B cell (primary cell): ENCODE measurements at regions of chr6 and their contacts with region 1.

Region 1: DNA sequence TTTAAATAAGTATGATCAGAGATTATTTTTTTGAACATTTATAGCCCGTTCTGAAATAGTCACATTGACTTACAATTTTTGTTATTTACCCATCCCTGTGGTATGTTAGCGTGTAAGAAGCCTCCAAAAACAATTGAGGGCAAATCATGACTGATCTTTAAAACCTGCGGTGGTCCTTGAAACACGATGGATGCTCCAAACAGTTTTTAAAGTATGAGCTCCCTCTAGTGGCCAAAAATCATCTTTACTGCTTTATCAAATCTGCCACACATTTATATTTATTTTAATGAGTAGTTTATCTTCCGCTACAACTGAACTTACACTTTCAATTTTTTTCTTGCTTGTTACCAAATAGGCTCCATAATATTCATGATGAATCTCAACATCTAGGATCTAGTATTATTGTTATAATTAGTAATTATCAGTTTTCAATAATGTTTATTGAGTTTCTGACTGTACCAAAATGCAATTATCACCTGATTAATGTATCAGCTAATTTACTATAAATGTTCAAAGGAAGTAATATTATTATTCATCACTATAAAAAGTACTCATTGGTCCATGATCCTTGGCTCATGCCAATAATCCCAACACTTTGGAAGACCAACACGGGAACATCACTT is 52.2 kb downstream of the MARCKS start:
- DNase-seq: peak; percentile 72
- ATAC-seq: peak; percentile 57
- H3K4me3 ChIP-seq: no peak overlapping the region
- H3K4me3 Mint-ChIP-seq: no peak overlapping the region
- H3K27ac ChIP-seq: no peak overlapping the region
- H3K27ac Mint-ChIP-seq: no peak overlapping the region
- H3K4me1 ChIP-seq: no peaks in the 10 kb centered on the region
- H3K4me1 Mint-ChIP-seq: peaks cover 2% of the 10 kb centered on the region
- H3K27me3 ChIP-seq: no peaks in the 10 kb centered on the region
- H3K27me3 Mint-ChIP-seq: no peaks in the 10 kb centered on the region
- CTCF ChIP-seq: peak; percentile 97

Region 2: DNA sequence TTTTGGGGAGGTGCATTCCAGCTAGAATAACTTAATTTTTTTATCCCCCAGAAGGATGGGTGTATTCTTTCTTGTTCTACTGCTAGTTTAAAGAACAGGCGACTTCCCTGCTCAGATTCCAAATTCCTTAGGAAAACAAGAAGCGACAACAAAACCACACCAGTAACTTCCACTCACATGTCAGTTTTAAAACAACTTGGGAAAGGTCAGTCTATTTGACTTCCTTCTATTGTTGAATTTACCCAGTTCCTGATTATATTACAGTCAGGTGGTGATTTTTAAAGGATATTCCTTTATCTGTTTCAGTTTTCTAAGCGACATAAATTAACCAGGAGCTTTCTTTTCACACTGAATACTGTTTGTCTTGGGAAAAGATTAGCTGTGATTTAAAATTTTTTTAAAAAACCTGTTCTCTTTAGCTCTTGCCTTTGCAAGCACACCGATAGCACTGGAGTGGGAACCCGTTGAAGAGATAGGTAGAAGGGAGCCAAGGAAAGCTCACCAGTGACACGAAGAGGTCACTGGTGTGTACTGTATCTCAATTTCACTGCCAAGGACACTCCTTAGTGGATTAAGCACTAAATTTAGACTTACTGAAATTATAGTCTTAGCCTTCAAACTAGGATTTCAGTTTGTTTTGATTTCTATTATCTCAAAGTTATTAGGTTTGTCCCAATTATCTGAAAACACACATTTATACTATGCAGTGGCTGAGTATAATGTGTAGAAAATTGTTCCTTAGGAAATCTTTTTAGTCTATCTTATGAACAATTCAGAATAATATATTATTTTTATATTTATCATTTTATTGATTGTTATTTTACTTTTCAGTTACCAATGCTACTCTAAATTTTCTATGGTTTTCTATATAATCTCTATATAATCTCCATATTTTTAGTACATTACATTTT is 29.9 kb before region 1 on chr6:
- CTCF ChIA-PET with region 1: interaction called, 20 read pairs
- POLR2A ChIA-PET with region 1: no interaction called
- intact Hi-C with region 1: loop called (anchors 1 kb)
- DNase-seq: peak; percentile 74
- ATAC-seq: peak; percentile 100
- H3K4me3 ChIP-seq: no peak overlapping the region
- H3K4me3 Mint-ChIP-seq: no peak overlapping the region
- H3K27ac ChIP-seq: no peak overlapping the region
- H3K27ac Mint-ChIP-seq: no peak overlapping the region
- H3K4me1 ChIP-seq: no peaks in the 10 kb centered on the region
- H3K4me1 Mint-ChIP-seq: peaks cover 3% of the 10 kb centered on the region
- H3K27me3 ChIP-seq: no peaks in the 10 kb centered on the region
- H3K27me3 Mint-ChIP-seq: no peaks in the 10 kb centered on the region
- CTCF ChIP-seq: peak; percentile 91

Region 3: GRCh38 chr6:113920663-113921267 is 11.4 kb after region 1 on chr6:
- CTCF ChIA-PET with region 1: interaction called, 23 read pairs
- POLR2A ChIA-PET with region 1: no interaction called
- intact Hi-C with region 1: no loop called
- DNase-seq: no peak
- ATAC-seq: no peak
- H3K4me3 ChIP-seq: no peak overlapping the region
- H3K4me3 Mint-ChIP-seq: no peak overlapping the region
- H3K27ac ChIP-seq: no peak overlapping the region
- H3K27ac Mint-ChIP-seq: no peak overlapping the region
- H3K4me1 ChIP-seq: no peaks in the 10 kb centered on the region
- H3K4me1 Mint-ChIP-seq: peaks cover 5% of the 10 kb centered on the region
- H3K27me3 ChIP-seq: no peaks in the 10 kb centered on the region
- H3K27me3 Mint-ChIP-seq: no peaks in the 10 kb centered on the region
- CTCF ChIP-seq: no peak

Region 4: DNA sequence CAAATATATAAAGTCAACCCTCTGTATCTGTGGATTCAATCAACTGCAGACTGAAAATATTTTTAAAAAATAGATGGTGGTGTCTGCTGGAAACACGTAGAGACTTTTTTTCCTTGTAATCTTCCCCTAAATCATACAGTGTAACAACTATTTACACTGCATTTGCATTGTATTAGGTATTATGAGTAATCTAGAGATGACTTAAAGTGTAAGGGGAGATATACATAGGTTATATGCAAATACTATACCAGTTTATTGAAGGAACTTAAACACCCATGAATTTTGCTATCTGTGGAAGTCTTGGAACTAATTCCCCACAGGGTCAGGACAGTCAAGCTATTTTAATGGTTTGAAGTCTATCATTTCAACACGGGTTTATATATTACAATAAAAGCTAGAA is 51.5 kb after region 1 on chr6:
- CTCF ChIA-PET with region 1: no interaction called
- POLR2A ChIA-PET with region 1: no interaction called
- intact Hi-C with region 1: no loop called
- DNase-seq: no peak
- ATAC-seq: no peak
- H3K4me3 ChIP-seq: no peak overlapping the region
- H3K4me3 Mint-ChIP-seq: no peak overlapping the region
- H3K27ac ChIP-seq: no peak overlapping the region
- H3K27ac Mint-ChIP-seq: no peak overlapping the region
- H3K4me1 ChIP-seq: no peaks in the 10 kb centered on the region
- H3K4me1 Mint-ChIP-seq: peaks cover 35% of the 10 kb centered on the region
- H3K27me3 ChIP-seq: no peaks in the 10 kb centered on the region
- H3K27me3 Mint-ChIP-seq: no peaks in the 10 kb centered on the region
- CTCF ChIP-seq: no peak

Region 5: DNA sequence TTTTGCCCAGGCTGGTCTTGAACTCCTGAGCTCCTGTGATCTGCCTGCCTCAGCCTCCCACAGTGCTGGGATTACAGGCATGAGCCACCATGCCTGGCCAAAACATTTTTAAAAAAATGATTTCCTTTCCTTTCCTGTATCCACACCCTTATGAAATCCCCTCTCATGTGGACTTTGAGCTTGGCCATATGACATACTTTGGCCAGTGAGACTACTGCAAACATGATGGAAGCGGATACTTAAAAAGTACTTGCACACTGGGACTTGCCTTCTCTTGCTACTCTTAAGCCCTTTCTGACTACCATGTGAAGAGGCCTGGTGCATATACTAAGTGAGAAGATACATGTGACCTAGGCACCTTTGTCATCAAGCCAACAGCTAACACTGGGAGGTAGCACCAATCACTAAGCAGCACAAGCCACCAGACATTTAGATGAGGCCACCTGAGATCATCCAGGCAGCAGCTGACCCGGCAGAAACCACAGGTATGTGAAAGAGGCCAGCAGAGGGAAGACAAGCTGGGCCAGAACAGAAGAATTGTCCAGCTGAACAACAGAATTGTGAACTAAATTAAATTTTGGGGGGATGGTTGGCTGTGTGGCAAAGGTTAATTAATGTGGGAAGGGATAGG is 140.1 kb after region 1 on chr6:
- CTCF ChIA-PET with region 1: no interaction called
- POLR2A ChIA-PET with region 1: no interaction called
- intact Hi-C with region 1: no loop called
- DNase-seq: no peak
- ATAC-seq: no peak
- H3K4me3 ChIP-seq: no peak overlapping the region
- H3K4me3 Mint-ChIP-seq: no peak overlapping the region
- H3K27ac ChIP-seq: no peak overlapping the region
- H3K27ac Mint-ChIP-seq: no peak overlapping the region
- H3K4me1 ChIP-seq: no peaks in the 10 kb centered on the region
- H3K4me1 Mint-ChIP-seq: no peaks in the 10 kb centered on the region
- H3K27me3 ChIP-seq: no peaks in the 10 kb centered on the region
- H3K27me3 Mint-ChIP-seq: peaks cover 4% of the 10 kb centered on the region
- CTCF ChIP-seq: no peak

Region 6: DNA sequence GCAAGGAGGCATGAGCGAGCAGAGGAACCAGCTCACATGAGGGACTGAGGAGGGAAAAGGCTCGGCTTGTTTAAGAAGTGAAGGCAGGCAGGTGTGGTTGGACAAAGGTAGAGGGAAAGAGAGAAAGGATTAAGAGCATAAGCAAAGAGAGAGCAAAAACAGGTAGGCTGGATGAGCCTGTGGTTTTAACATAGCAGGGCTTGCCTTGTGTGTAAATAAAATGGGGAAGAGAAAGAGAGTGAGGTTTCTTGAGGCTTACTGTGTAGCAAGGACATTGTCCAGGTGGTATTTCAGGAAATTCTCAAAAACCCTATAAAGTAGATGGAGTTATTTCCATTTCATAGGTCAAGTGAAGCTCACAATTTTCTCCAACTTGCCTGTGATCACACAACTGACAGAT is 155.5 kb after region 1 on chr6:
- CTCF ChIA-PET with region 1: no interaction called
- POLR2A ChIA-PET with region 1: no interaction called
- intact Hi-C with region 1: no loop called
- DNase-seq: no peak
- ATAC-seq: no peak
- H3K4me3 ChIP-seq: no peak overlapping the region
- H3K4me3 Mint-ChIP-seq: no peak overlapping the region
- H3K27ac ChIP-seq: no peak overlapping the region
- H3K27ac Mint-ChIP-seq: no peak overlapping the region
- H3K4me1 ChIP-seq: no peaks in the 10 kb centered on the region
- H3K4me1 Mint-ChIP-seq: no peaks in the 10 kb centered on the region
- H3K27me3 ChIP-seq: no peaks in the 10 kb centered on the region
- H3K27me3 Mint-ChIP-seq: peaks cover 5% of the 10 kb centered on the region
- CTCF ChIP-seq: no peak